Activated CD8-positive, alpha-beta T cell treated with anti-CD3 and anti-CD28 coated beads, Interleukin-2, amount 10 ng/mL, durations not matched to agents 7 days and 5 days (primary cell): ENCODE measurements at regions of chr13 and their contacts with region 1.

Region 1: GRCh38 chr13:49606747-49607648 is 21.3 kb upstream of the ARL11 start:
- DNase-seq: peak; percentile 87
- ATAC-seq: peak; percentile 100
- H3K4me3 Mint-ChIP-seq: peak overlapping the region; percentile 78
- H3K27ac Mint-ChIP-seq: peak overlapping the region; percentile 78
- H3K4me1 Mint-ChIP-seq: peaks cover 4% of the 10 kb centered on the region
- H3K27me3 Mint-ChIP-seq: peaks cover 4% of the 10 kb centered on the region

Region 2: GRCh38 chr13:49132479-49133002 is 474.5 kb before region 1 on chr13:
- CTCF ChIA-PET with region 1: no interaction called
- POLR2A ChIA-PET with region 1: no interaction called
- DNase-seq: no peak
- ATAC-seq: no peak
- H3K4me3 Mint-ChIP-seq: no peak overlapping the region
- H3K27ac Mint-ChIP-seq: no peak overlapping the region
- H3K4me1 Mint-ChIP-seq: peaks cover 2% of the 10 kb centered on the region
- H3K27me3 Mint-ChIP-seq: no peaks in the 10 kb centered on the region

Region 3: DNA sequence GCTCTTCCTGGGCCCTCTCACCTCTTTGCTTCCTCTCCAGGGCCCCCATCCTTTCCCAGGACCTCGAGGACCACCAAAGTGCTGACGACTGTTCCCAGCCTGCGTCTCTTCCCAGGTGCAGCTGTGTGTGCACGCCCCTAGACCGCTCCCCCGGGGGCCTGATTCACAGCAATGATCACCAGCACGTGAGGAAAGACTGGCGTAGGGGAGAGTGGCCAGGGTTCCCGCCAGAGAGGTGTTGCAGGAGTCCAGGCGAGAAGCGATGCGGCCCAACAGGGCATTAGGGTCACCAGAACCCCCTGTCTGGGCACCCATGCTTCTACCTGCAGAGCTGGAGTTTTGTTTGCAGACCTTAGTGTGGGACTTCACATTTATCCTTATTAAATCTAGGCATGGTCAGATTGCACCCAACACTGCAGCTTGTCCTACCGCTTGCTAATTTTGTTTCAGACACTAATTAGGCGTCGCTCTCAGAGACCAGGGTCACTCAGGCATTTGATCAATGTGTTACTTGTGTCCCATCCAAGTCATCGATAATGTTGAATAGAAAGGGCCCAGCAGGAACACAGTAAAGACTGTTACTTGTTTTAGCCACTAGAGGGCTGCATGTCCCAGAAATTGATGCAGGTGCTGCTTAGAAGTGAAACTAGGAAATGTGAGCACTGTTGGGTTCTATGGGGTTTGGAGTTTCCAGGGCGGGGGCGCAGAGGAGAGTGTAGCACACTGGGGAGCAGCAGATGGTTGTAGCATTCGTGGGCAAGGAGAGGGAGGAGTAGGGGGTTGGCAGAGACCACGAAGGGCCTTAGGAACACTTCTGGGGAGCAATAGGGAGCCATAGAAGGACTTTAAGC is 306.0 kb before region 1 on chr13:
- CTCF ChIA-PET with region 1: interaction called, 25 read pairs
- POLR2A ChIA-PET with region 1: interaction called, 3 read pairs
- DNase-seq: peak; percentile 80
- ATAC-seq: peak; percentile 95
- H3K4me3 Mint-ChIP-seq: peak overlapping the region; percentile 58
- H3K27ac Mint-ChIP-seq: peak overlapping the region; percentile 84
- H3K4me1 Mint-ChIP-seq: peaks cover 17% of the 10 kb centered on the region
- H3K27me3 Mint-ChIP-seq: no peaks in the 10 kb centered on the region